HEK293 (cell line): ENCODE measurements at regions of chr5 and their contacts with region 1.

Region 1: DNA sequence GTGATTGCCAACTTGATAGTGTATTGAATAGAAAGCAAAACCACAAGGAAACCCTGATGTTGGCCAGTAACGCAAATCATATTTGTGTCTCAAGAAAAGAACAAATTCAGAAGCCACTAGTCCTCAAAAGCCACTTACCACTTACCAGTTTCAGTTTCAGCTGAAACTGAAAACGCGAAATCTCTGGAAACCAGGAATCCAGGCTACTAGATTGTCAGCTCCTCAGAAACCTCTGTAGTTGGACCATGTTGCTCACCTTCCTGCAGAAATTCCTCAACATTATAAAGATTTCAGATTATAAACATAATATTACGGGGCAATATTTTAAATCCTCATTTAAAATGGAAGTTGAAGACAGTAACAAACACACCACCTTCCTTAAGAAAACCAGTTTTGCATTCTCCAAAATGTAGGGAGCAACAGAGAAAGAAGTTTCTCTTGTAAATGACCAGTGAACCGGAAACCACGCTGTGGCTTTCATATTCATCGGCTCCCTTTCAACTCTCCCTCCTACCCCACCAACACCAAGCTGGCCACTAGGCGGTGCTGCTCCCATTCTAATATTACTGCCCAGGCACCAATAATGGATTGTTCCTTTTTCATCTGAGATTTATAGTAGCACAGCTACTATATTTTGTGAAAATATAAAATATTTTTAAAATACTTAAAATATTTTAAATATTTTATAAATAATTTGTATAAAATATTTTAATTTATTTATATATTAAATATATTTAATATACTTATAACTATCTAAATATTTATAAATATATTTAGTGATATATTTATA is 8.7 kb upstream of the TMED7 start:
- H3K4me3 ChIP-seq: no peak overlapping the region
- H3K27ac ChIP-seq: no peak overlapping the region
- H3K4me1 ChIP-seq: no peaks in the 10 kb centered on the region
- CTCF ChIP-seq: peak; percentile 79

Region 2: GRCh38 chr5:115723220-115723619 is 88.7 kb after region 1 on chr5:
- CTCF ChIA-PET with region 1: no interaction called
- POLR2A ChIA-PET with region 1: no interaction called
- H3K4me3 ChIP-seq: no peak overlapping the region
- H3K27ac ChIP-seq: no peak overlapping the region
- H3K4me1 ChIP-seq: no peaks in the 10 kb centered on the region
- CTCF ChIP-seq: no peak

Region 3: GRCh38 chr5:115831163-115831768 is 196.7 kb after region 1 on chr5:
- CTCF ChIA-PET with region 1: interaction called, 21 read pairs
- POLR2A ChIA-PET with region 1: no interaction called
- H3K4me3 ChIP-seq: no peak overlapping the region
- H3K27ac ChIP-seq: no peak overlapping the region
- H3K4me1 ChIP-seq: no peaks in the 10 kb centered on the region
- CTCF ChIP-seq: no peak

Region 4: DNA sequence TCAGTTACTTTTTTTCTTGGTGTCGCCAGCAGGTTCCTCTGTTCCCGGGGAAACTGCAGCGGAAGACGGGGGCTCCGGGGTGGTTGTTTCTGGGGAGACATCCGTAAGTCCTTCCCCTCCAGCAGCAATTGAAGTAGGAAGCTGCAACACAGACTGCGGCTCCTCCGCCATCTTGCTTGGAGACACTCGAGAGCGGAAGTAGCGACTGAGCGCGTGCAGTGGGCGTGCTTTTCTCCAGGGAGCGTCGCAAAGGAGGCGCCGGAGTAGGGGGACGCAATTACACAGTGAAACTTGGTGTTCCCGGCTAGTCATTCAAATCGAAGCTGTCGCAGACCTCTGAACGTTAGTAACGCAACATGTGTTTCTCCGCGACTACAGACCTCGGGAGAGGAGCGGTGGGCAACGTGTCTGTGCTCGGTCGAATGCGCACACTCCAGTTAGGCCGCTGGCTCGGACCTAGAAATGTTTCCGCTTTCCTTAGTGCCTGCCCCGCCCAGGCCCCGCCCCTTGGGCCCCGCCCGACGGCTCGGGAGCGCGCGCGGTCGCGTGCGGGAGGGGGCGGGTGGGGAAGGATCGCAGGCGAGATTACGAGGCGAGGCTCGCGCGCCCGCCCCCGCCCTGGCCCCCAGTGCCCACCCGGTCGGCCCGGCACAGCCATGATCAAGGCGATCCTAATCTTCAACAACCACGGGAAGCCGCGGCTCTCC is 207.0 kb after region 1 on chr5 and contains the starts of genes AP3S1 and ATG12:
- CTCF ChIA-PET with region 1: interaction called, 10 read pairs
- POLR2A ChIA-PET with region 1: no interaction called
- H3K4me3 ChIP-seq: peak within 1 kb of the TSS; percentile 64
- H3K27ac ChIP-seq: peak within 1 kb of the TSS; percentile 95
- H3K4me1 ChIP-seq: peaks cover 21% of the 10 kb centered on the region; the same call in 1 of the 2 replicates
- CTCF ChIP-seq: no peak

Region 5: GRCh38 chr5:116068028-116068632 is 433.6 kb after region 1 on chr5:
- CTCF ChIA-PET with region 1: interaction called, 19 read pairs
- POLR2A ChIA-PET with region 1: no interaction called
- H3K4me3 ChIP-seq: no peak overlapping the region
- H3K27ac ChIP-seq: no peak overlapping the region
- H3K4me1 ChIP-seq: no peaks in the 10 kb centered on the region
- CTCF ChIP-seq: 0 out of 2 replicates have a peak, but pooled peaks have one; percentile 34